HepG2 (cell line): ENCODE measurements at regions of chr16 and their contacts with region 1.

Region 1: DNA sequence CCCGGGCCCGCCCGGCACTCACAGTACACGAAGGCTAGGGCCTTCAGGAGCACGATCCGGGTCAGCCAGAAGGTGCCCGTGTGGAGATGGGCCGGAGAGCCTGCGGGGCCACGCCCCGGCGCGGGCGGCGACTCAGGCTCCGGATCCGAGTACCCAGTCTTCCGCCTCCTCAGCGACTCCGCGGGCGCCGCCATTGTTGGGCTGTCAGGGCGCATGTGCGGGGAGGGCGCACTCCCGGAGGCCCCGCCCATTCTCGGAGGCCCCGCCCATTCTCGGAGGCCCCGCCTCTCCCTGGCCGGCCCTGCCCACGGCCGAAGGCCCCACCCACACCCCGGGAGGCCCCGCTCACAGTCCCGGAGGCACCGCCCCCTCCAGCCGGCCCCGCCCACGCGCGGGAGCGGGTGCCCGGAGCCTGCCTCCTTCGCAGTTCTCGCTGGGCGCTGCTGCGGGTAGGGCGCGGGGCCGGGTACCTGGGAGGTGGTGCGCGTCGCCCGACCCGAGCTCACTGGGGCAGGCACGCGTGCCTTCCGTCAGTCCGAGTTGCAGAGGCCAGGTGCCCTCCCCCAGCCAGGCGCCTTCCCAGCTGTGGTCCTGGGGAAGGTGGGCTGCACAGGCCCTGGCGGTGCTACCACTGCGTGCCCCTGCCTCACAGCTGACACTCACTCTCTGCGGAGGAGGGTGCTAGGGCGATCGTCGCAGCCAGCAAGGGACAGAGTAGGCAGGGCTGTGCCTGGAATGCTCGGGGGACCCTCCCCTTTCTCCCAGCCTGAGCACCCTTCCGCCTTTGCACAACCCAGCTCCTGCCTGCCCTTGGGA is at the start of gene LMF1:
- DNase-seq: peak; percentile 81
- ATAC-seq: peak; percentile 77
- H3K4me3 ChIP-seq: peak within 1 kb of the TSS; percentile 83 to 95 (median 86)
- H3K27ac ChIP-seq: peak within 1 kb of the TSS; percentile 84
- H3K4me1 ChIP-seq: peaks cover 65% of the 10 kb centered on the region
- H3K27me3 ChIP-seq: peaks cover 4 to 25% of the 10 kb centered on the region in 2 experiments; a peak in 4 of 5 replicates
- CTCF ChIP-seq: no peak; the same call in 1 of the 2 replicates
- EP300 ChIP-seq: no peak
- POLR2A ChIP-seq: peak; percentile 66 to 95
- RAD21 ChIP-seq: peak; percentile 19; the same call in 1 of the 2 replicates
- total RNA-seq, gene LMF1: 2.3 and 6.8 TPM in 2 replicates

Region 2: DNA sequence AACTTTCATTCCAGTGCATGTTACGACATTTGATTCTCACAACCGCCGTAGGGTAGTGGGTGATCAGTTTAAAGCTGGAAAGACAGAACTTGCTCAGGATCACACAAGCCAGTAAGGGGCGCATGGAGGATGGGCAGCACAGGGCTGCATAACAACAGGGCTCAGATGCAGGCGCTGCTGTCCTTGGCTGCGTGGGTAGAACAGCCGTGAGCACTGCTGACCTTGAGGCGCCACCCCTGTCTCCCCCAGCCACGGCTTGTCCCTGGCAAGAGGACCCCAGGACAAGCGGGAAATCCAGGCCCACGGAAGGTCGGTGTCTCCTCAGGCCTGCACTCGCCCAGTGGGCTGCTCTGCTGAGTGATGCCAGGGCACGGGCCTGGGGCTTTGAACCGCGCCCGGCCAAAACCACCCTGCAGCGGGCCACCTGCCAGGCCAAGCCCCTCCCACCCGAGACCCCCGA is 84.9 kb before region 1 on chr16:
- CTCF ChIA-PET with region 1: no interaction called
- POLR2A ChIA-PET with region 1: no interaction called
- in situ Hi-C with region 1: no loop called
- intact Hi-C with region 1: loop called (anchors 5 kb)
- DNase-seq: no peak
- ATAC-seq: peak; percentile 20; the same call in 2 of the 3 replicates
- H3K4me3 ChIP-seq: no peak overlapping the region
- H3K27ac ChIP-seq: no peak overlapping the region
- H3K4me1 ChIP-seq: no peaks in the 10 kb centered on the region
- H3K27me3 ChIP-seq: no peaks in the 10 kb centered on the region; a peak in 2 of 5 replicates
- CTCF ChIP-seq: peak; percentile 48
- EP300 ChIP-seq: no peak
- POLR2A ChIP-seq: no peak
- RAD21 ChIP-seq: no peak

Region 3: GRCh38 chr16:982145-983043 is 11.4 kb after region 1 on chr16:
- CTCF ChIA-PET with region 1: no interaction called
- POLR2A ChIA-PET with region 1: interaction called, 38 read pairs
- in situ Hi-C with region 1: no loop called
- intact Hi-C with region 1: no loop called
- DNase-seq: no peak
- ATAC-seq: no peak
- H3K4me3 ChIP-seq: peak overlapping the region in 1 of 3 experiments; percentile 43; a peak in 1 of 6 replicates
- H3K27ac ChIP-seq: no peak overlapping the region
- H3K4me1 ChIP-seq: no peaks in the 10 kb centered on the region
- H3K27me3 ChIP-seq: peaks cover 22 to 85% of the 10 kb centered on the region in 2 experiments
- CTCF ChIP-seq: no peak
- EP300 ChIP-seq: no peak
- POLR2A ChIP-seq: no peak
- RAD21 ChIP-seq: no peak